Esophagus muscularis mucosa (tissue), 4 donors: ENCODE measurements at regions of chr6 and their contacts with region 1.

Region 1: GRCh38 chr6:12233693-12234571 is 56.2 kb upstream of the EDN1 start:
- DNase-seq: no peak
- H3K4me3 ChIP-seq: peak overlapping the region in 1 of 4 donors; percentile 12
- H3K27ac ChIP-seq: no peak overlapping the region
- H3K4me1 ChIP-seq: peaks cover 0 to 14% (median 9%) of the 10 kb centered on the region in 4 donors
- H3K27me3 ChIP-seq: peaks cover 0 to 1% (median 0%) of the 10 kb centered on the region in 4 donors
- CTCF ChIP-seq: peak; percentile 68 to 76 (median 76)
- EP300 ChIP-seq: no peak
- POLR2A ChIP-seq: no peak

Region 2: DNA sequence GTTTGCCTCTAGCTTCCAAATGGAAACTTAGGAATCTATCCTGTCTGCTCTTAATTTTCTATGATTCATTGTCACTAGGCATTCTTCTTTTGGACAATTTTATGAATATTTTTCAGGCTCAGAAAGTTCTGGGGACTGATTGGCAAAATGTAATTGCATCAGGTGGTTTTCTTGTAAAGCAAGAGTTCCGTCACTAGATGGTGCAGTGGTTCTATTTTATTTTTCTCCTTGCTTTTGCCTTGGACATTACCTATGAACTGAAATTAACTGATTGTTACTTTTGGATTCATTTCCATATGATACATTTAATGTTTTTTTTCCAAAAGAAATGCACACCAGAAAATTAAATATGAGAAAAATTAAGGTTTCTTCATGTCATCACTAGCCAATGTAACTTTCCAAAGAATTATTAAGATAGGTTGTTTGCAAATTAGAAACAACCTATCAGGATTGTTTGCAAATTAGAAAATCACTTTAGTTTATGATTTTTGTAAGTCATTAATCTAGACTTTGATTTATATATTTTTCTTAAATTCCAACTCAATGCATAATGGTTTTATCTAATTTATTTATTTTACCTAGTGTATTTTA is 648.4 kb before region 1 on chr6:
- intact Hi-C with region 1: loop called (anchors 10 kb)
- DNase-seq: no peak
- H3K4me3 ChIP-seq: no peak overlapping the region
- H3K27ac ChIP-seq: no peak overlapping the region
- H3K4me1 ChIP-seq: peaks cover 0 to 17% (median 15%) of the 10 kb centered on the region in 4 donors
- H3K27me3 ChIP-seq: no peaks in the 10 kb centered on the region
- CTCF ChIP-seq: peak; percentile 54 to 60 (median 59)
- EP300 ChIP-seq: no peak
- POLR2A ChIP-seq: no peak

Region 3: GRCh38 chr6:11654876-11655275 is 579.1 kb before region 1 on chr6:
- intact Hi-C with region 1: loop called (anchors 2 kb)
- DNase-seq: no peak
- H3K4me3 ChIP-seq: no peak overlapping the region
- H3K27ac ChIP-seq: no peak overlapping the region
- H3K4me1 ChIP-seq: peaks cover 28 to 42% (median 34%) of the 10 kb centered on the region in 4 donors
- H3K27me3 ChIP-seq: no peaks in the 10 kb centered on the region
- CTCF ChIP-seq: no peak
- EP300 ChIP-seq: no peak
- POLR2A ChIP-seq: no peak

Region 4: GRCh38 chr6:12189661-12190060 is 44.3 kb before region 1 on chr6:
- intact Hi-C with region 1: no loop called
- DNase-seq: no peak
- H3K4me3 ChIP-seq: no peak overlapping the region
- H3K27ac ChIP-seq: no peak overlapping the region
- H3K4me1 ChIP-seq: no peaks in the 10 kb centered on the region
- H3K27me3 ChIP-seq: no peaks in the 10 kb centered on the region
- CTCF ChIP-seq: no peak
- EP300 ChIP-seq: no peak
- POLR2A ChIP-seq: no peak